ENCODE measurements at regions of chr9 and their contacts with region 1.

Region 1: GRCh38 chr9:71806901-71807307 is 38.6 kb upstream of the CEMIP2 start:
- H3K4me3 ChIP-seq: no peak overlapping the region
- H3K27ac ChIP-seq: no peak overlapping the region
- H3K4me1 ChIP-seq: no peaks in the 10 kb centered on the region
- CTCF ChIP-seq: peak; percentile 71; the same call in 1 of the 2 replicates

Region 2: DNA sequence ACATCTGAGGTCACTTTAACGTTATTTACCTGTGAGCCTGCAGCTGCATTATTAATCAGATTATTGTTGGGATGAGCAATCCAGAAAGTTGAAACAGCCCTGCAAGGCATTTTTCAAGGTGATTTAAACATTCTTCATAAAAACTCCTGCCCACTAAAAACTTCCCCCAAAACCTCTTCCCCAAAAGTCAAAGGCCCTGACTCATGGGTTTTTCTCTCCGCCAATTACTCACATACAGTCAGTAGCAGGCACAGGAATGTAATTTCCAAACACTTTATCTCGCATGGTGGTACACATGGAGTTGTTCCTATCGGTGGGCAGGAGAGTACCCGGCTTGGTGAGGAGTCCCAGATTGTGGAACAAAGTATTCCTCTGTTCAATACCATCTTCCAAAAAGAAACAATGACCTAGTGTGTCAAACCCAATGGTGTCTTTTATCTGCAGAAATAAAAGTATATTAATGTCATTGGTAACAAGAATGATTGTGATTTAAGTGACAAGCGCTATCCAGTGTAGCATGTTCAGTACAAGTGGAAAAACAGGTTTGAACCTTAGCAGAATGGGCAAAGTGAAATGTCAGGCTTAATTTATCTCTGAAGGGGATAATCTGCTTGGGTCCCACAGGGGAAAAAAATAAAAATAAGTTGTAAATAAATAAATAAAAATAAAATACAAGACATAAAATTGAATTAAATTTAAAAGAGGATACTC is 76.9 kb before region 1 on chr9:
- CTCF ChIA-PET with region 1: no interaction called
- POLR2A ChIA-PET with region 1: no interaction called
- H3K4me3 ChIP-seq: no peak overlapping the region
- H3K27ac ChIP-seq: no peak overlapping the region
- H3K4me1 ChIP-seq: peaks cover 2% of the 10 kb centered on the region; the same call in 1 of the 2 replicates
- CTCF ChIP-seq: no peak

Region 3: GRCh38 chr9:71795097-71795813 is 11.6 kb before region 1 on chr9:
- CTCF ChIA-PET with region 1: interaction called, 24 read pairs
- POLR2A ChIA-PET with region 1: no interaction called
- H3K4me3 ChIP-seq: no peak overlapping the region
- H3K27ac ChIP-seq: no peak overlapping the region
- H3K4me1 ChIP-seq: no peaks in the 10 kb centered on the region
- CTCF ChIP-seq: no peak

Region 4: GRCh38 chr9:71819115-71819739 is 12.3 kb after region 1 on chr9:
- CTCF ChIA-PET with region 1: interaction called, 32 read pairs
- POLR2A ChIA-PET with region 1: no interaction called
- H3K4me3 ChIP-seq: no peak overlapping the region
- H3K27ac ChIP-seq: no peak overlapping the region
- H3K4me1 ChIP-seq: no peaks in the 10 kb centered on the region
- CTCF ChIP-seq: no peak

Region 5: DNA sequence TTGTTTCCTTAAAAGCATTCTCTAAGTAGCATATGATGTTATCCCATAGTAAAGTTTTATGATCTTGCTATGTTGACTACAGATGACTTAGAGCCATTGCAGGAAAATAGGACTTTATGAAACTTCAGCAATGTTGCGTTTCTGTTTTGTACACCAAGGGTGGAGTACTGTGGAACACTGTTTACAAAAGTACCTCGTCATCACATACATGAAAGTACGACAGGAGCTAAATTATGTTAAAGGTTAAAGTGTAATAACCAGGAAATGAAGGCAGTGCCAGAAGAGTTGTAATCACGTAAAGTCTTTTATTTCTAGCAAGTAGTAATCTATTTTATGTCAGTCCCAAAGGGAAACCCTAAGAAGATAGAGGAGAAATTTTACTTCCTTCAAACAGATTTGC is 155.4 kb after region 1 on chr9:
- CTCF ChIA-PET with region 1: no interaction called
- POLR2A ChIA-PET with region 1: no interaction called
- H3K4me3 ChIP-seq: no peak overlapping the region
- H3K27ac ChIP-seq: no peak overlapping the region
- H3K4me1 ChIP-seq: no peaks in the 10 kb centered on the region
- CTCF ChIP-seq: no peak

Region 6: DNA sequence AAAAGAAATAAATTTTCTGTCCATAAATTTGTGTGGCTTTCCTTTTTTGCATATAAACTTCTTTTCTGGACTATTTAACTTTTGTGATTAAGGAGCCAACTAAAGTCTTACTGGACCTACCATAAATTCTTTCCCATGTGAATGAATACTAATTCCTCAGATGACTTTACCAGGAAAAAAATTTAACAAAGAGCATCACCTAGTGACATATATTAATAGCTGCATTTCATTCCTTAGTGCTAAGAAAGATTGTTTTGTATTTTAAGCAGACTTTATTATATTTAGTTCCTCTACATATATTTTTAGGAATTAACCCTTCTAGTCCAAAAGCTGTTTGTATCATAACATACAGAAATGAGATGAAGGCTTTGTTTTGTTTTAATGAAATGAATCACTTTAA is 168.9 kb after region 1 on chr9:
- CTCF ChIA-PET with region 1: interaction called, 14 read pairs
- POLR2A ChIA-PET with region 1: no interaction called
- H3K4me3 ChIP-seq: no peak overlapping the region
- H3K27ac ChIP-seq: no peak overlapping the region
- H3K4me1 ChIP-seq: no peaks in the 10 kb centered on the region
- CTCF ChIP-seq: no peak

Region 7: DNA sequence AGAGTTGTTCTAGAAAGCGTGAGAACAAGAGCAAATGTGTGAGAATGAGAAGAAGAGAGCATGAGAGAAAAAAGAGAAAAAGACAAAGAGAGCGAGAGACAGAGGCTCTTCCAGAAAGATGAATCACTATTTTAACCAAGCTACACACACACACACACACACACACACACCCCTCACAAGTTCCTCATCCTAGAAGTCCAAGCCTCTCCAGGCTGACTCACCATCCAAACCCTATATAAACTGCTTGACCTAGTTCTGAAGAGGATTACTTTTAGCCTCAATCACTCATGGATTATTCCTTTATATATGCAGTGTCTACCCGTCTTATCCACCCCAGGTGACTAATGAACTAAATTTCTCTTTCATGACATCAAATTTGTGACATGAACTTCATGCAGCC is 215.9 kb after region 1 on chr9:
- CTCF ChIA-PET with region 1: interaction called, 116 read pairs
- POLR2A ChIA-PET with region 1: interaction called, 4 read pairs
- H3K4me3 ChIP-seq: no peak overlapping the region
- H3K27ac ChIP-seq: no peak overlapping the region
- H3K4me1 ChIP-seq: no peaks in the 10 kb centered on the region
- CTCF ChIP-seq: no peak

Region 8: GRCh38 chr9:72060513-72060912 is 253.6 kb after region 1 on chr9 and contains the start of gene C9orf57:
- CTCF ChIA-PET with region 1: no interaction called
- POLR2A ChIA-PET with region 1: no interaction called
- H3K4me3 ChIP-seq: no peak within 1 kb of the TSS
- H3K27ac ChIP-seq: no peak within 1 kb of the TSS
- H3K4me1 ChIP-seq: no peaks in the 10 kb centered on the region
- CTCF ChIP-seq: no peak